Activated naive CD4-positive, alpha-beta T cell treated with anti-CD3 and anti-CD28 coated beads, Interleukin-2, amount 10 ng/mL, durations not matched to agents 7 days and 5 days (primary cell): ENCODE measurements at regions of chr12 and their contacts with region 1.

Region 1: DNA sequence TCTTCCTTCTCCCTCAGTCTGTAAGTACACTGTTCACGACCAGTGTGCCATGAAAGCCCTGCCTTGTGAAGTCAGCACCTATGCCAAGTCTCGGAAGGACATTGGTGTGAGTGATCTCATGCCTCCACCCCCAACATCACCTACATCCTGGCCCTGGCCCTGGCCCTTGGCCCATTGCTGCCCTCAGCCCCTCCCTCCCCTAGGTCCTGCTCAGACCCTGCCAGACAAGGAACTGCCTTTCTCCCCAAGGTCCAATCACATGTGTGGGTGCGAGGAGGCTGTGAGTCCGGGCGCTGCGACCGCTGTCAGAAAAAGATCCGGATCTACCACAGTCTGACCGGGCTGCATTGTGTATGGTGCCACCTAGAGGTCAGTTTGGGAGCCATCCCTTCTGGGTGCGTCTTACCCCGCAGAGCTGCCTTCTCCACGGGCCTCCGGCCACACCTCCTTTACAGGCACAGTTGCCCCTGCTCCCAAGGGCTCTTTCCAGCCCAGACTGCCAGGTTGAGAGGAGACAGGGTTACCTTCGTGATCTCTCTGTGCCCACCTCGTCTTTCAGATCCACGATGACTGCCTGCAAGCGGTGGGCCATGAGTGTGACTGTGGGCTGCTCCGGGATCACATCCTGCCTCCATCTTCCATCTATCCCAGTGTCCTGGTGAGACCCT is 9.2 kb downstream of the DGKA start:
- DNase-seq: peak; percentile 91
- H3K4me3 Mint-ChIP-seq: peak overlapping the region; percentile 37
- H3K27ac Mint-ChIP-seq: peak overlapping the region; percentile 86
- H3K4me1 Mint-ChIP-seq: peaks cover 92% of the 10 kb centered on the region
- H3K27me3 Mint-ChIP-seq: no peaks in the 10 kb centered on the region

Region 2: DNA sequence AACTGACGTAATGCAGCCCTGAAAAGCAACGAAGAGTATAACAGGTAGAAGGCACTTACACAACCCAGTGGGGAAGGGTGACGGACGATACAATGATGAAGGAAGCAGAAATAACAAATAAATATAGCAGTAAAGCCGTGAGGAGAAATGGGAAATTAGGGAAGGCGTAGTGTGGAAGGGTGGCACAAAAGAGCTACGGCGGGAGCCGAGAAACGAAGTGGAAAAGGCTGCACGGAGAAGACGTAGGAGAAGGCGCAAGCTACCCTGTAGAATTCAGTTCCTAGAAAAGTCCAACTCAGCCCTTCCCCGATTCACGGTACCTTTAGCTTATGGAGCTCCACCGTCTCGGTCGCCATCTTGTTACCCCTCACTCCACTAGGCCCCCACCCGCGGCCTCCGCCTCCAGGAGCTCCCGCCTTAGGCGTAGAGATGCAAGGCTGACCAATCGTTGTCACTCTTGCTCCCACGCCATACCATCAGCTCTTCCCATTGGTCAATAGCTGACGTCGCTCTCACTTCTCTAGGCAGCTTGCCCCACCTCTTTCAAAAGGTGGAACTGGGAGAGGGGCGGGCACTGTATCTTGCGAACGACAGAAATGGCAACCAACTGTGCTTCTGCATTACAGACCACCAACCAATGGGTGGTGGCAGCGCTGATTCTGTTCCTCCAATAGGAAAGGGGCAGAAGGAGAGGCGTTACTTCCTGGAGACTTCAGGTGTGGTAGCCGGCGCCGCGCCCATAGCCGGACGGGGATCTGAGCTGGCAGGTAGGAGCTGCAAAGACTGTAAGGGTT is 122.7 kb before region 1 on chr12 and contains the starts of genes ORMDL2 and SARNP:
- CTCF ChIA-PET with region 1: interaction called, 33 read pairs
- DNase-seq: peak; percentile 99
- H3K4me3 Mint-ChIP-seq: no peak within 1 kb of the TSS
- H3K27ac Mint-ChIP-seq: no peak within 1 kb of the TSS
- H3K4me1 Mint-ChIP-seq: peaks cover 46% of the 10 kb centered on the region
- H3K27me3 Mint-ChIP-seq: no peaks in the 10 kb centered on the region

Region 3: DNA sequence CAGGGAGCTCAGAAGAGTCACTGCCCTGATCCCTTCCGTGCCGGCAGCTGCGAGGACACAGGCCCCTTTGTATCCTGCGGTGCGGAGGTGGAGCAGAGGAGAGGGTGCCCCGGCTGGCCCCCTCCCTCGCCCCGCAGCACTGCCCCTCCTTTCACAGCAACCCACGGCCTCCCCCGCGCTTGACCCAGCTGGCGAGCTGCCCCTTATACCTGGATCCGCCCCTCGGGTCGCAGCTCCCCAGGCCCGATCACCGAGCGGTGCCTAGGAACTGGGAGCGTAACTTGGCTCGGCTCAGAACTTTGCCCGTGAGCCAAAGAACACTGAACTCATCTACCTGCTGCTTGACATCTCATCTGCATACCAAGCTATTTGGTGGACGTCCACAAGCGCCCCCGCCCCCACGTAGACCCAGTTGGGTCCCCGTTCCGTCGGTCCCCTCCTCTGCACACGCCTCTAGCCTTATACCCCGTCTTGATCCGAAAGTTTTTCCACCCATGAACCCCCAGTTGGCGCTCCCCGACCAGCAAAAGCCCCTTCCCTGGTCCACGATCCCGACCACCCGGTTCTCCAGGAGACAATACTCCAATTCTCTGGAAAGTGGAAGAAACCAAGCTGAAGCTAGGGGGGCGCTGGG is 110.1 kb before region 1 on chr12:
- CTCF ChIA-PET with region 1: interaction called, 15 read pairs
- DNase-seq: peak; percentile 62
- H3K4me3 Mint-ChIP-seq: peak overlapping the region; percentile 97
- H3K27ac Mint-ChIP-seq: peak overlapping the region; percentile 94
- H3K4me1 Mint-ChIP-seq: peaks cover 66% of the 10 kb centered on the region
- H3K27me3 Mint-ChIP-seq: no peaks in the 10 kb centered on the region

Region 4: GRCh38 chr12:55926738-55927587 is 13.2 kb before region 1 on chr12:
- CTCF ChIA-PET with region 1: interaction called, 66 read pairs
- DNase-seq: peak; percentile 97
- H3K4me3 Mint-ChIP-seq: peak overlapping the region; percentile 92
- H3K27ac Mint-ChIP-seq: peak overlapping the region; percentile 100
- H3K4me1 Mint-ChIP-seq: peaks cover 50% of the 10 kb centered on the region
- H3K27me3 Mint-ChIP-seq: no peaks in the 10 kb centered on the region

Region 5: GRCh38 chr12:55979069-55979468 is 38.9 kb after region 1 on chr12:
- CTCF ChIA-PET with region 1: no interaction called
- DNase-seq: no peak
- H3K4me3 Mint-ChIP-seq: no peak overlapping the region
- H3K27ac Mint-ChIP-seq: no peak overlapping the region
- H3K4me1 Mint-ChIP-seq: peaks cover 14% of the 10 kb centered on the region
- H3K27me3 Mint-ChIP-seq: no peaks in the 10 kb centered on the region

Region 6: GRCh38 chr12:56158029-56158925 is 218.1 kb after region 1 on chr12 and contains the start of gene MYL6:
- CTCF ChIA-PET with region 1: no interaction called
- DNase-seq: peak; percentile 97
- H3K4me3 Mint-ChIP-seq: peak within 1 kb of the TSS; percentile 95
- H3K27ac Mint-ChIP-seq: peak within 1 kb of the TSS; percentile 94
- H3K4me1 Mint-ChIP-seq: peaks cover 51% of the 10 kb centered on the region
- H3K27me3 Mint-ChIP-seq: no peaks in the 10 kb centered on the region